Left cardiac atrium (tissue), 4 donors: ENCODE measurements at regions of chr17 and their contacts with region 1.

Region 1: DNA sequence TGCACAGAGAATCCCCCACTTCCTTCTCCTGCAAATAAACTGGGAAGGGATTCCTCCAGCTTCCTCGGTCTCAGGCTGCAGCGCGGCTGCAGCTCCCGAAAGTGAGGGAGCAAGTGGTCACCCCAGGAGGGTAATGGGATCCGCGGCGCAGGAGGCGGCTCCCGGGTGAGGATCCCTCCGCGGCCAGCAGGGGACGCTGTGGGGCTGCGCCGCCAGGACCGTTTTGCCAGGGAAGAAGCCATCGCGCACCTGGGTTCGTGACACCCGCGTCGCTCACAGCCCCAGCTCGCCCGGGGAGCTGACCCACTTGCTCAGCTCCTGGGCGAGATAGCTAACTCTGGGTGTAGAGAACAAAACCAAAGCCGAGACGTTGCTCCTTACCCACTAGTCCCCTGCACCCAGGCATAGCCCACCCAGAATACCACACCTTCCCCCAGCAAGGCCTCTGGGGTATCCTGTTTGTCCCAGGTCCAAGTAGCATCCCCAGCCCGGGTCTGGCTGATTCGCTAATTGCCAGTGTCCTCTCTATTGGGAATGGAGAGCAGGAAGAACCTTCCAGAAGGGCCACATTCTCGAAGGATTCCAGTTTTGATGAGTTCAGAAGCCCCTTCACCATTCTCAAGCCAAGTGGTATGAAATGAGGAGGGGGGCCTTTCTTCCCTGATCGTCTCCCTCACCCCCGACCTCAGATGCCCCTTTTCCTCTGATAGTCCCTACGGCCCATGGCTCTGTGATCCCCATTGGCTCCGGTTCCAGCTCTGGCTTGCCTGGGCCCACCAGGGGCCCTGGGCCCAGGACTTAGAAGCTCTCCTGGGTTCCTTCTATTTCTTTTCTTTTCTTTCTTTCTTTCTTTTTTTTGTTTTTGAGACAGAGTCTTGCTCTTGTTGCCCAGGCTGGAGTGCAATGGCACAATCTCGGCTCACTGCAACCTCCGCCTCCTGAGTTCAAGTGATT is 14.1 kb downstream of the CYGB start:
- DNase-seq: peak; percentile 75
- ATAC-seq: peak; percentile 36 to 62

Region 2: DNA sequence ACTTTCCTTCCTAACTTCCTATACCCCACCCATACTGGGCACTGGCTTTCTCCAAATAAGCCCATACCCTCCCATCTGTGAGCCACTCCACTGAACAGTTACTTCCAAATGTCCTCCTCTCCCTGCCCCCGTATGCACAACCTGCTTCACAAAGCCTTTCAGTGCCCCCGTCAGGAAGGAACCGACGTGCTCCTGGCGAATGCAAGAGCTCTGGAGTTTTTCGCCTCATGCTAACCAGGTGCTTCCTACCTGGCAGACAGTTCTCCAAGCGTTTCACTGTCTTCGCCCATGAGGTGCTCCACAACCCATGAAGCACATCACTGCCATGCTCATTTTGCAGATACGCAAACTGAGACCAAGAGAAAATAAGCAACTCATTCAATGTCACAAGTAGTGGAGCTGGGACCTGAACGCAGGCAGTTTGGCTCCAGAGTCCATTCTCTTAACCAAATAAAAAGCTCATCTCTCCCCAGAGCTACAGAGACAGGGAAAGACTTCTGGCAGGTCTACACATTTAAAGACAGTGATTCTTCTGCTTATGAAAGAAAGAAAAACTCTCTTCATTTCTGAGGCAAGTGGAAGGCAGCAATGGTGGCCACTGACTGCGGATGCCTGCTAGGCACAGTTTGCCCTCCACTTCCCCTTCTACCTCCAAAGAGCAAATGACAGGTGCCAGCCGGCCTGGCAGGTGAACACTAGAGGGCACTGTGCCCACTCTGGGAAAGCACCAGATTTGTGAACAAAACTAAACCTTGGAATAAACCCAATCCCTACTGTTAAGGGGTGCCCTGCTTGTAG is 115.1 kb before region 1 on chr17:
- intact Hi-C with region 1: no loop called
- DNase-seq: peak; percentile 64
- ATAC-seq: no peak

Region 3: DNA sequence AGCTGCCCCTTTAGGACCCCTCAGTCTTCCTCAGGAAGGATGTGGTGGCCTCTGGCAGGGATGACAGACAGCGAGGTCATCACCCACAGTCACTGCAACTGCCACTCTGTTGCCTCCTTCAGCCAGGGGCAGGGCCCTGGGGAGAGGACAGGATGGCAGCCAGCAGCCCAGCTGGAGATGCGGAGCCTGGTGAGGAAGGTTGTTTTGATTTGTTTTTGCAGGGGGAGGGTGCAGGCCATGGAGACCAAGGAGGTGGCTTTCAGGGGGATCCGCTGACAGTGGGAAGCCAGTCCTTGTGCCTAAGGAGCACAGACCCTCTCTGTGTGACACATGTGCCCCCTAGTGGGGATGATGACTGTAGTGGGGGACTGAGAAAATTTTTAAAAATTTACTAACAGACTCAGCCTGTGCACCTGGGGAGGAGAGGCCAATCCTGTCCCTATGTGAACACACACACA is 23.9 kb after region 1 on chr17:
- intact Hi-C with region 1: loop called in 1 of 2 experiments (anchors 1 kb)
- DNase-seq: peak; percentile 72
- ATAC-seq: peak; percentile 55 to 62

Region 4: GRCh38 chr17:76585818-76586593 is 62.6 kb after region 1 on chr17 and contains the start of gene ST6GALNAC2:
- intact Hi-C with region 1: loop called in 1 of 2 experiments (anchors 2 kb)
- DNase-seq: peak; percentile 76
- ATAC-seq: peak; percentile 92
- total RNA-seq, gene ST6GALNAC2: 5.0 to 5.1 TPM

Region 5: DNA sequence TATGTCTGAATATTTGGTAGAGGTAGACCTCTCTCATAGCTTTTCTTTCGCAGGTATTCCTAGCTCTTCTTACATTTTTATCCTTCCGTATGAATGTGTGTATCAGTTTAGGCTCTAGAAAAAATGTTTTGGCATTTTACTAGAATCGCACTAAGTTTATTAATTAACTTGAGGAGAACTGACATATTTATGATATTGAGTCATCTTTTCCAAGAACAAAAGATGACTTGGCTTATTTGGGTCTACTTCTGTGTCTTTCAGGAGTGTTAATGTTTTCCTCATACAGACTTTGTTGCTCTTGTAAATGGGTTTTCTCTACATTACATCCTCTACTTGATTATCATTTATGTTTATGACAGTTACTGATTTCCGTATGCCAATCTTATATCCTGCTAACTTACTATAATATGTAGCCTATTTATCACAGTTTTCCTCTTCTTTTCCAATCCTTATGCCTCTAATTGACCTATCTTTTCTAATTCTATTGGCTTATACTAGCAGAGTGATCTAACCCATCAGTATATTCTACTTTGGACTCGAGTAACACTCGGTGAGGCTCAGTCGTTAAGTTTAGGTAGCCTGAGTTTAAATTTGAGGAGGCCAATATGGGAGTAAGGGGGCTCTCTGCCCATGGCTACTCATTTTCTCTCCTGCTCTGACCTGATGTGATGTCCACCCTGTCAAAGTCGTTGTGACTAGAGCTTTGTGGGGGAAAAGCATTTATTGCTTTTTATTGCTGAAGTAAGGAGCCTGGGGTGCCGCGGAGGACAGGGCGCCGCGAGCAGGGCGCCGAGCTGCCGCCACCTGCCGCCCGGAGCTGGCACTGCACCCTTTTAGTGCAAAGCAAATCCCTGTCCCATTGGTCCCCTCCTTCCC is 100.1 kb after region 1 on chr17:
- intact Hi-C with region 1: loop called in 1 of 2 experiments (anchors 2 kb)
- DNase-seq: peak; percentile 80
- ATAC-seq: peak; percentile 90 to 92